ENCODE measurements at regions of chr17 and their contacts with region 1.

Region 1: GRCh38 chr17:71118039-71118438 is 948.7 kb downstream of the KCNJ2 start:
- DNase-seq: no peak
- ATAC-seq: no peak

Region 2: DNA sequence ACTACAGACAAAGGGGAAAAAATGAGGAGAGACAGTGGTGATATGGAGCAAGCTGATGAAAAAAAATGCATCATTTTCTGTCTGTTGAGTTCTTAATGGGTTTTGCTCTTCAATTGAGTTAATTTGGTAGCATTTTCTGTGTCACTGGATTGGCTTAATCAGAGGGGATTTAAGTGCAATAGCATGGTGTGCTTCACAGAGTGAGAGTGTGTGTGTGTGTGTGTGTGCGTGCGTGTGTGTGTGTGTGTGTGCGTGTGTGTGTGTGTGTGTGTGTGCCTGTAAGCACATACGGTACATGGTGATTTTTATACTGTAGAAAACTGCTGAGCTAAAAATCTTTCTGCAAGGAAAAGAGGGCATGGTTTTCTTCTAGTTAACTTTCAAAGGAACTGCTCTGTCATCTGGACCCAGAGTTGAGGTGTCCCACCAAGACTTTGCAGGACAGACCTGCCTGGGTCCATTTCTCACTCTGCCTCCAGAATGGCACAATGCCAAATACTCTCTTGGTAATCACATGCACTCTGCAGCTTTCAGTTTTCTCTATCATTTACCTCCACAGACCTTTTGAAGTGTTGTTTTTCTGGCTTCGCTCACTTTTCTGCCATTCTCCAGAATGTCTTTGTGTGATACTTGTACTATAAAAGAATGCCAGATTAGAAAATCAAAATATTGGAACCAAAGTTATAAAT is 50.2 kb after region 1 on chr17:
- intact Hi-C with region 1: no loop called
- DNase-seq: no peak
- ATAC-seq: no peak

Region 3: DNA sequence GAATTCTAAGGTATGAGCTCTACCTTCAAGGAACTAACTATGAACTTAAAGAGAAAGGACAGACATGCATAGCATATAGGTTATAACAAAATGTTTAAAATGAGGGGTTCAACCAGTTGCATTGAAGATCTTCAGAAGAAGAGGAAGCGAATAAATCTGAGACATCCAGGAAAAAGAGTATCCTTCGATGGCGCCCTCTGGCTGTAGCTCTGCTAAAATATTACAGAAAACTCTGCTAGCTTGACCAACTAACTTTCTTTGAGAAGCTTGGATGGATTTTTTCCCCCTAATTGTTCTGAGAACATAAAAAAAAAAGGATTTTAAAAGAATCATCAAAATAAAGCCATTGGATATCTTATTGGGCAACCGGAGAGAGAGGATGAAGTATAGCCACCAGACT is 342.9 kb after region 1 on chr17:
- intact Hi-C with region 1: loop called (anchors 5 kb)
- DNase-seq: no peak
- ATAC-seq: no peak

Region 4: DNA sequence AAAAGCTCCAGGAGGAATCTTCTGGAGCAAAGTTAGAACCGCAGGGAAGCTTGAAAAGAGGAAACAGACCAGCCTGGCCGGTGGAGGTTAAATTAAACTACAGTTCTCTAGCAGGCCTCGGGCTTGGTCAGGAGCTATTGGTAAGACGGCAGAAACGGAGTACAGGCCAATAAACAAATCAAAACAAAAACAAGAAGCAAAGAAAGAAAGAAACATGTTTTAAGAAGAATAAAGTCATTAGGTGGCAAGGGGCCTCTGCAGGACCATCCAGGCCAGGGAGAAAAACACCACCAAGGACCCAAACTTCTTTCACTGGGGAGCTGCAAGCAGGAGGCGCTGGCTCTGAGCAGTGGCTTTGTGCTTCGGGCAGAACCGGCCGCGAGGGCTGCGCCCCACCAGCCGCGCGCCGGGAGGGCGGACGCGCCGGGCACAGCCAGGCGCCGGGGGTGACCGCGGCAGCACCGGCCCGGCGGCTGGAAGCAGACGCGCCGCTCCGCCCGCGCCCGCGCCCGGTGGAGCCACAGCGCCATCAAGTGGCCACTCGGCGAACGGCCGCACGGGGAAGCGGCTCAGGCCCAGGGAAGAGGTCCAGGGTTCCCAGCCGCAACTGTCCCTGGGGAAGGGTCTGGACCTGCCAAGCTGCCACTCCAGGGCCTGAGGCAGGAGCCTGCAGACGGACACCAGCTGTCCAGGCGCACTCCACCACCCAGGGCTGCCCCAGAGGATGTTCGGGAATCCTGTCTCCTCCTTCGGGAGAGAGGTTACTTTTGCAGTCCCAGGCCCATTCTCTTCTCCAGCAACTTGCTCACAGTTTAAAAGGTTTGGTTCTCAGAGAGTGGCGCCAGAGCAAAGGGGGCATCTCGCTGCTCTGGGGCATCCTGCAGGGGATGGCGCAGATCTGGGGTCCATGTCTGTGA is 1422.2 kb after region 1 on chr17:
- intact Hi-C with region 1: loop called (anchors 5 kb)
- DNase-seq: peak; percentile 84
- ATAC-seq: peak; percentile 98